ENCODE measurements at regions of chr12 and their contacts with region 1.

Region 1: DNA sequence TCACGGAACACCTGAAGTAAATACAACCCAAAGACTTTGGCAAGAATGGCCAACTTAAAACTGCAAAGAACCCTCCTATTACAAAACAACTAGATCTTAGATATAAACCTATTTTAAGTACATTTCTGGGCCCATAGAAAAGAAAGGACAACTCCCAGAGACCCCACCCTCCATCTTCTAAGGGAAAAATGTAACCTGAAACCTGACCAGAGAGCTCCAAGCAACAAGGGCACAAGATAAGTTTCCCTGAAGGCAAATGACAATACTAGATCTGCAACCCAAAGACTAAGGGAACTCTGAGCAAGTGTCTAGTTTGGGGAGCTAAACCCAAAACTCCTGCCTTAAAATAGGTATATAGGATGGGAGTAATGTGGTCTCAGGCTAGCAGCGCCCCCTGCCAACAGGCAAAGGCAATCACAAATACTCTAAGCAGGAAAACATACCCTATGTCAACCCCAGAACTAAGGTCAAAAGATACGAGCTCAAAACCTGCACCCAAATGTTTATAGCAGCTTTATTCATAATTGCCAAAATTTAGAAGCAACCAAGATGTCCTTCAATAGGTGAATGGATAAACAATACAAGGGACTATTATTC is 218.9 kb downstream of the ITPR2 start:
- DNase-seq: no peak
- H3K4me3 ChIP-seq: no peak overlapping the region
- H3K27ac ChIP-seq: no peak overlapping the region
- H3K27me3 ChIP-seq: no peaks in the 10 kb centered on the region
- CTCF ChIP-seq: peak; percentile 63

Region 2: GRCh38 chr12:26113853-26114719 is 500.0 kb before region 1 on chr12:
- CTCF ChIA-PET with region 1: interaction called, 80 read pairs
- POLR2A ChIA-PET with region 1: no interaction called
- DNase-seq: peak; percentile 53
- H3K4me3 ChIP-seq: peak overlapping the region; percentile 62
- H3K27ac ChIP-seq: peak overlapping the region; percentile 80
- H3K27me3 ChIP-seq: no peaks in the 10 kb centered on the region
- CTCF ChIP-seq: peak; percentile 23; the same call in 1 of the 2 replicates

Region 3: DNA sequence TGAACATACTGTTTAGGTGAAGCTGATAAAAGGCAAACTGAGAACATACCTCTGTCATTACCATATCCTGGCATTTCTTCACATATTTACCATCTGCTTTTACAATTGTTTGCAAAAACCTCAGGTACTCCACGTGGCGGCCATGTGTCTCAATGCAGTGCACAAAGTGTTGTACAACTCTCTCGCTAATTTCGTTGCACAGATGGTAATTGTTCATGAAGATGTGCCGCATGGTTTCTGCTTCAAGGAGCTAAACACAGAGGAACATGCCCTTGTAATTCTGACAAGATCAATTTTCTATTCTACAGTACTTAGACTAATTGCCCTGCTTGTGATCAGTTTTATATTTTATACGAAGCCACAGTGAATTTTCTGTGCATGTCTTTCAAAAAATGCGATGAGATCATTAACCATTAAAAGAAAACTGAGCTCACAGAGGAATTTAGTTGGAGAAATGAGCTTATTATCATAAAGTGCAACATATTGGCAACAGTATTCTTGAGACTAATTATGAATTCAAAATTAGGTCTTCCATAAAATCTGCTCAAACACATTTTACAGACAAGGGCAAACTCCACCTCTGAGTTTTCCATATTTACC is 14.9 kb before region 1 on chr12:
- CTCF ChIA-PET with region 1: interaction called, 10 read pairs
- POLR2A ChIA-PET with region 1: no interaction called
- DNase-seq: no peak
- H3K4me3 ChIP-seq: no peak overlapping the region
- H3K27ac ChIP-seq: no peak overlapping the region
- H3K27me3 ChIP-seq: no peaks in the 10 kb centered on the region
- CTCF ChIP-seq: no peak

Region 4: DNA sequence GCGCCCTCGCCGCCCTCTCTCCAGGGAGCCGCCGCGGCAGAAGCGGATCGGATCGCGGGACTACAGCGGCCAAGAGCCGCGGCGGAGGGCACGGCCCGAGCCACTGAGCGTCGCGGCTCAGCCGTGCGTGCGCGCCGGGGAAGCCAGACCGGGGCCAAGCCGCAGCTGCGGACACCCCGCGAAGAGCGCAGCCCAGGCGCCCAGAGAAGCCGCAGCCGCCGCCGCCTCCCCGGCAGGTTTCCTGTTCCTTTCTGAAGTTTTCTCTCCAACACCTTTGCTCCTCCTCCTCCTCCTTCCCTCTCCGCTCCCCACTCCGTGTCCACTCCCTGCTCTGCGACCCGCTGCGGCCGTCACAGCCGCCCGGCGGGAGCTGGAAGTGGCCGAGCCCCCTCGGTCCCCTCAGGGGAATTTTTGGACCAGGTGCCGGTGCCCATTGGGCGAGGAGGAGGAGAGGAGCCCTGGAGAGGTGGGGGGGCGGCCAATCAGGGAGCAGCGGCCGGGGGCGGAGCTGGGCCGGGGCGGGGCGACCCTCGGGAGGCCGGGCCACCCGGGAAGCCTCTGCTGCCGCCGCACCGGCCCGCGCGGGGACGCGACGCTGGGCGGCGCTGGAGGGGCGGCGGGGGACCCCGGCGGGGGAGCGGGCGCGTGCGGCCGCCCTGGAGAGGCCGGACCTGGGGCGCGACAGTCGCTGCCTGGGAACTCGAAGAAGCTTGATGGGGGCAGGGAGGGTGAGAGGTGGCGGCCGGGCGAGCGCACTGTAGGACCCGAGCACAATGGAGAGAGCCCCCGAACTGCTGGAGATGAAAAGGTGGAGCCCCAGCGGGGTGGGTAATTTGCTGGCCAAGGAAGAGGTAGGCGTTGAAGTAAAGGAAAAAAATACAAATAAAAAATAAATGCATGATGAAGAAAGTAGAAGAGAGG is 219.0 kb after region 1 on chr12 and contains the start of gene ITPR2:
- CTCF ChIA-PET with region 1: no interaction called
- POLR2A ChIA-PET with region 1: no interaction called
- DNase-seq: no peak
- H3K4me3 ChIP-seq: peak within 1 kb of the TSS; percentile 93
- H3K27ac ChIP-seq: peak within 1 kb of the TSS; percentile 85
- H3K27me3 ChIP-seq: no peaks in the 10 kb centered on the region
- CTCF ChIP-seq: peak; percentile 4; the same call in 1 of the 2 replicates
- polyA plus RNA-seq, gene ITPR2: 3.4 and 4.1 TPM in 2 replicates

Measured in AG04450 (cell line).